CD4-positive, alpha-beta memory T cell (primary cell): ENCODE measurements at regions of chr15 and their contacts with region 1.

Region 1: DNA sequence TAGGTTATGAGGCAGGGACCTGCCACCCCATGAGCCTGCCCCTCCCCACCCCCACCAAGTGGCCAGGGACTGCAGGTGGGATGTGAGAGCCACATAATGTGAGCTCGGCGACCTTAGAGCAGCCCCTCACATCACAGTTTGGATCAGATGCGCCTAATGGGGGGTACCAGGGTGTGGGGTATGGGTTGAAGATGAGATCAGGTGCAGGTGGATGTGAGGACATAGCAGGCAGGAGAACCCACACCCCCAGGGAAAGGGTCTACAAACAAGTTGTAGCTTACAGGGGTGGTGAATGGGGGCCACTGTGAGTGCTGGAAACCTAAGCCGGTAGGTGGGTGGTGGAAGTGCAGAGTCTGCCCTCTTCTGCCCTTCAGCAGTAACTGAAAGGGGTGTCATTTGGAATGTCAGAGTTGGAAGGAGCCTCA is 94.0 kb downstream of the CORO2B start:
- DNase-seq: no peak
- H3K4me3 ChIP-seq: no peak overlapping the region
- H3K4me3 Mint-ChIP-seq: no peak overlapping the region
- H3K27ac ChIP-seq: no peak overlapping the region
- H3K27ac Mint-ChIP-seq: no peak overlapping the region
- H3K4me1 ChIP-seq: no peaks in the 10 kb centered on the region
- H3K4me1 Mint-ChIP-seq: peaks cover 0 to 5% (median 3%) of the 10 kb centered on the region in 4 donors
- H3K27me3 ChIP-seq: no peaks in the 10 kb centered on the region
- H3K27me3 Mint-ChIP-seq: peaks cover 9 to 19% of the 10 kb centered on the region in 2 donors

Region 2: GRCh38 chr15:68658151-68658550 is 14.6 kb before region 1 on chr15:
- CTCF ChIA-PET with region 1: interaction called, 43 read pairs
- POLR2A ChIA-PET with region 1: no interaction called
- intact Hi-C with region 1: no loop called
- DNase-seq: no peak
- H3K4me3 ChIP-seq: no peak overlapping the region
- H3K4me3 Mint-ChIP-seq: no peak overlapping the region
- H3K27ac ChIP-seq: no peak overlapping the region
- H3K27ac Mint-ChIP-seq: no peak overlapping the region
- H3K4me1 ChIP-seq: no peaks in the 10 kb centered on the region
- H3K4me1 Mint-ChIP-seq: no peaks in the 10 kb centered on the region
- H3K27me3 ChIP-seq: no peaks in the 10 kb centered on the region
- H3K27me3 Mint-ChIP-seq: peaks cover 2 to 7% of the 10 kb centered on the region in 2 donors

Region 3: DNA sequence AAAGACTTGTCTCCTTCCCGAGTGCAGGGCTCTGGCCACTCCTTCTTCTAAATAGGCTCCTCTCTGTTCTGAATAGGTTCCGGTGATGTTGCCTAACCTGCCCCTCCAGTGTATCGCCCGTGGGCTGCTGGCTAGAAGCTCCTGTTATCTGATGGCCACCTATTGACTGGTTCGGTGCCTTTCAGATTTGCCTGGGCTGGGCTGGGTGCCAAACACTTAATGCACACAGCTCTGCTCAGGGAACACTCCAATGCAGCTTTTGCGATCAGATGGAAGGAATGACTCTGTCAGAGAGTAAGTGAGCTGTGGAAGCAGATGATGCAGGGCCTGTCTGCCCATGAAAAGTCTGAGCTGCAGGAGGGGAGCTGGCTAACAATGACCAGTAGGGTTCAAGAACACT is 18.9 kb after region 1 on chr15:
- CTCF ChIA-PET with region 1: interaction called, 30 read pairs
- POLR2A ChIA-PET with region 1: no interaction called
- intact Hi-C with region 1: no loop called
- DNase-seq: no peak
- H3K4me3 ChIP-seq: no peak overlapping the region
- H3K4me3 Mint-ChIP-seq: no peak overlapping the region
- H3K27ac ChIP-seq: no peak overlapping the region
- H3K27ac Mint-ChIP-seq: no peak overlapping the region
- H3K4me1 ChIP-seq: peaks cover 10% of the 10 kb centered on the region
- H3K4me1 Mint-ChIP-seq: peaks cover 5 to 9% (median 7%) of the 10 kb centered on the region in 4 donors
- H3K27me3 ChIP-seq: no peaks in the 10 kb centered on the region
- H3K27me3 Mint-ChIP-seq: peaks cover 6 to 7% of the 10 kb centered on the region in 2 donors

Region 4: DNA sequence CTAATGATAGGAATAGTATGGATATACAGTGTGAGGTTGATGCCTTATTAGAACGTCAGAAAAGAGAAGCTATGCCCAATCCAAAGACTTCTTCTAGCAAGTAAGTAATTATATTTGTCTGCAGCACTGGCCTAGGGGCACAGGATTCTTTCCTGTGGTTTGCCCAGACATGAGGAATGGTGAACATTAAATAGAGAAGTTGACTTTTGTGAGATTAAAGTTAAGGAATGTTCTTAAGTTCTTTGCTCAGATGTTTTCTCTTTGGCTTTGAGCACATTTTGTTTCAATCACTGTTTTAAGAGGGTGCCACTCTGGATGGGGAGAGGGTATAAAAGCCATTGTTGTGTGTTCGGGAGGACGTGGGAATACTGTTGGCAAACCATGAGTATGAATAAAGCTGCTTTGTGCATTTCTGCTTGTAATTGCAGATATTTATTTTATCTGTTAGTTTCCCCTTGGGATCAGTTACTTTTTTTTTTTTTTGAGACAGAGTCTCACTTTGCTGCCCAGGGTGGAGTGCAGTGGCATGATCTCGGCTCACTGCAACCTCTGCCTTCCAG is 749.6 kb after region 1 on chr15:
- CTCF ChIA-PET with region 1: no interaction called
- POLR2A ChIA-PET with region 1: no interaction called
- intact Hi-C with region 1: no loop called
- DNase-seq: no peak
- H3K4me3 ChIP-seq: no peak overlapping the region
- H3K4me3 Mint-ChIP-seq: no peak overlapping the region
- H3K27ac ChIP-seq: no peak overlapping the region
- H3K27ac Mint-ChIP-seq: no peak overlapping the region
- H3K4me1 ChIP-seq: no peaks in the 10 kb centered on the region
- H3K4me1 Mint-ChIP-seq: peaks cover 0 to 4% (median 0%) of the 10 kb centered on the region in 4 donors
- H3K27me3 ChIP-seq: no peaks in the 10 kb centered on the region
- H3K27me3 Mint-ChIP-seq: peaks cover 0 to 2% of the 10 kb centered on the region in 2 donors